ENCODE measurements at regions of chrX and their contacts with region 1.

Region 1: DNA sequence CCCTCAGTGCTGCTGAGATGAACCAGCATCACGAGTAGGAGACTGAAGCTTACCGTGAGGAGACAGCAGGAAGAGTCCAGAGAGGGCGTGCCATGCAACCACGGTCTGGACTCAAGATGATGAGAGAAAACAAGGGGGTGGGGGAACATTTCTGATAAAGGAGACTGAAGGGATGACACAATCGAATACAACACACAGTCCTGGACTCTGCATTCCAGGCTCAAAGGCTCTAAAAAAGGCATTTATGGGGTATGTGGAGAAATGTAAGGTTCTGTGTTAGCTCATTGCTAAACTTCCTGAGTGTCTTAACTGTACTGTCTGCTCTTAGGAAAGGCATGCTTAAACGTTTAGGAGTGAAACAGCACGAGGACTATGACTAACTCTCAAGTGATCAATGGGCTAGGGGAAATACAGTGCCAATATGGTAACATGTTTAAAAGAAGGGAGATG is 20.6 kb upstream of the IRAK1 start:
- DNase-seq: no peak
- ATAC-seq: no peak
- H3K4me3 ChIP-seq: no peak overlapping the region
- H3K27ac ChIP-seq: no peak overlapping the region
- H3K4me1 ChIP-seq: no peaks in the 10 kb centered on the region
- H3K27me3 ChIP-seq: no peaks in the 10 kb centered on the region
- CTCF ChIP-seq: no peak

Region 2: GRCh38 chrX:154091678-154092077 is 51.3 kb after region 1 on chrX:
- CTCF ChIA-PET with region 1: no interaction called
- POLR2A ChIA-PET with region 1: interaction called, 15 read pairs
- in situ Hi-C with region 1: no loop called
- intact Hi-C with region 1: no loop called
- DNase-seq: no peak
- ATAC-seq: no peak
- H3K4me3 ChIP-seq: no peak overlapping the region
- H3K27ac ChIP-seq: peak overlapping the region; percentile 18; the same call in 1 of the 2 replicates
- H3K4me1 ChIP-seq: peaks cover 48% of the 10 kb centered on the region
- H3K27me3 ChIP-seq: no peaks in the 10 kb centered on the region
- CTCF ChIP-seq: no peak

Region 3: DNA sequence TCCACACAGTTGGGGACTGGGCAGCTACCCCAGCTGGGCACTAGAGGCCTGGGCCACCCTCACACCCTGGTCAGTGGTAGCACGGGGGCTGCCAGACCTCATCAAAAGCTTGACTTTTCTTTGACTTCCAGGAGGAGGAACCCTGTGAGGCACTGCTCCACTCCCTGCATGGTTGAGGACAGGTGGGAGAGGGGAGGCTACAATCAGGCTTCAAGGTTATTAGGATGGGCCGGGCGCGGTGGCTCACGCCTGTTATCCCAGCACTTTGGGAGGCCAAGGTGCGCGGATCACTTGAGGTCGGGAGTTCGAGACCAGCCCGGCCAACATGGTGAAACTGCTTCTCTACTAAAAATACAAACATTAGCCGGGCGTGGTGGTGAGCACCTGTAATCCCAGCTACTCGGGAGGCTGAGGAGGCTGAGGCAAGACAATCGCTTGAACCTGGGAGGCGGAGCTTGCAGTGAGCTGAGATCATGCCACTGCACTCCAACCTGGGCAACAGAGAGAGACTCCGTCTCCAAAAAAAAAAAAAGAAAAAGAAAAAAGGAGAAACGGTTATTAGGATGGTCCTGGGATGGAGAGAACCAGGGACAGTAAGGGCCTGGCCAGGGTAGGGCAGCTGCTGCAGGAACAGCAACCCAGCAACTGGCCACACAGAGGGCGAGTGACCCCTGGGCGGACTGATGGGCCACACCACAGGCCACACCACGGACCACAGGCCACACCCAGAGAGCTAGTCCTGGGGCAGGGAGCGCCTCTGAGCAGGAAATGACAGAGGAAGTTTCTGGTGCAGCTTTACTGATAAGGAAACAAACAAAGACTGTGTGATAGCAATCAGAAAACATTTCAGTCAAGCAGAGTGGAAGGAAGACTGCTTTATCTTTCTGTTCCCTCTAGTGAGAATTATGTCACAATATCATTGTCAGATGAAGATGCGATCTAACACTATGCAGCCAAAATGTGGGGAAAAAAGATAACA is 83.2 kb after region 1 on chrX:
- CTCF ChIA-PET with region 1: no interaction called
- POLR2A ChIA-PET with region 1: interaction called, 3 read pairs
- in situ Hi-C with region 1: loop called (anchors 5 kb)
- intact Hi-C with region 1: no loop called
- DNase-seq: no peak
- ATAC-seq: peak; percentile 61; the same call in 1 of the 2 replicates
- H3K4me3 ChIP-seq: no peak overlapping the region
- H3K27ac ChIP-seq: no peak overlapping the region
- H3K4me1 ChIP-seq: peaks cover 2% of the 10 kb centered on the region; the same call in 1 of the 2 replicates
- H3K27me3 ChIP-seq: no peaks in the 10 kb centered on the region
- CTCF ChIP-seq: no peak

Measured in Panc1 (cell line).